ENCODE measurements at regions of chr1 and their contacts with region 1.

Region 1: GRCh38 chr1:34781071-34781843 is at the start of gene GJB3:
- DNase-seq: peak; percentile 70
- H3K4me3 ChIP-seq: peak within 1 kb of the TSS; percentile 98
- H3K27ac ChIP-seq: peak within 1 kb of the TSS; percentile 92
- H3K4me1 ChIP-seq: peaks cover 70% of the 10 kb centered on the region
- H3K27me3 ChIP-seq: no peaks in the 10 kb centered on the region
- CTCF ChIP-seq: no peak
- total RNA-seq, gene GJB3: 58.6 and 63.0 TPM in 2 replicates

Region 2: DNA sequence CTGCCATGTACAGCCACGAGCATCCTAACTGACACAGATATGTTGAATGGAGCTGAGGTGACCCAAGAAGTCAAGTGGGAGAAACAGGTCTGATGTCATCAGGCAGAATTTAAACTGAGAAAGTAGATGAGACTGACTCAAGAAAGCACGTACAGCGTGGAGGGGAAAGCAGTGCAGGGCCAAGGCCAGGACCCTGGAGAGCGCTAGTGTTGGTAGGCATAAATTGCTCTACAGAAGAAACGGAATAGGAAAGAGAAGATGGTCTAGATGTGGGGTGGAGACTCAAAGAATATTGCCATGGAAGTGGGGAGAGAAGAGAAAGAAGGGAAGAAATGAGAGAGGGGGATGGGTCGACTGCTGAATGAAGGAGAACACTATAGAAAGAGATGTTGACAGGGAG is 71.7 kb before region 1 on chr1:
- CTCF ChIA-PET with region 1: no interaction called
- POLR2A ChIA-PET with region 1: no interaction called
- intact Hi-C with region 1: no loop called
- DNase-seq: peak in 1 of 2 experiments; percentile 2
- H3K4me3 ChIP-seq: no peak overlapping the region
- H3K27ac ChIP-seq: no peak overlapping the region
- H3K4me1 ChIP-seq: no peaks in the 10 kb centered on the region
- H3K27me3 ChIP-seq: peaks cover 45% of the 10 kb centered on the region
- CTCF ChIP-seq: no peak

Region 3: DNA sequence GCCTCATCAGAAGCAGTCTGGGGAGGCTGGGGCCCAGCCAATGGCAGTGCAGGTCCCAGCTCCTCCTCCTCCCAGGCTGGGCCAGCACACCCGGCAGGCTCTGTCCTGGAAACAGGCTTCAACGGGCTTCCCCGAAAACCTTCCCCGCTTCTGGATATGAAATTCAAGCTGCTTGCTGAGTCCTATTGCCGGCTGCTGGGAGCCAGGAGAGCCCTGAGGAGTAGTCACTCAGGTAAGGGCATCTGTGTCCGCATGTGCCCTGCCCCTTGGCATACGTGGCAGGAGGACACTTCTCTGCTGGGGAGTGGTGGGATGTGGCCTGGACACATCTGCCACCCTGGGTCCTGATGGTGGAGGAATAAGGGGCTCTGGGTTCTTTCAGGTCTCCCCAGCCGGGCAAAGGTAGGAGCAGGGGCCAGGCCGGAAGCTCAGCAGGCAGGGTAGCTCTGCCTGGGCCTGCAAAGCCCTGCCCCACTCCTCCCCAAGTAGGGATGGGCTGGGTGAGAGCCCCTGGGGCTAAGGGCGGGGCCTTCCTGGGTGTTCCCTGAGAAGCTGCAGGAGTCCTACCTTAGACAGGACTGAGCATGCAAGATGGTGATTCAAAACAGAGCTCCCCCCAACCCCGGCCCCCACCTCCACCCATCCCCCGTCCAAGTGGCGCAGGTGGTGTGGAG is 26.2 kb before region 1 on chr1 and contains the start of gene GJB5:
- CTCF ChIA-PET with region 1: interaction called, 9 read pairs
- POLR2A ChIA-PET with region 1: interaction called, 27 read pairs
- intact Hi-C with region 1: loop called (anchors 1 kb)
- DNase-seq: peak; percentile 83 to 87
- H3K4me3 ChIP-seq: peak within 1 kb of the TSS; percentile 52
- H3K27ac ChIP-seq: peak within 1 kb of the TSS; percentile 81
- H3K4me1 ChIP-seq: peaks cover 47% of the 10 kb centered on the region
- H3K27me3 ChIP-seq: no peaks in the 10 kb centered on the region
- CTCF ChIP-seq: no peak
- total RNA-seq, gene GJB5: 18.1 and 20.0 TPM in 2 replicates

Region 4: DNA sequence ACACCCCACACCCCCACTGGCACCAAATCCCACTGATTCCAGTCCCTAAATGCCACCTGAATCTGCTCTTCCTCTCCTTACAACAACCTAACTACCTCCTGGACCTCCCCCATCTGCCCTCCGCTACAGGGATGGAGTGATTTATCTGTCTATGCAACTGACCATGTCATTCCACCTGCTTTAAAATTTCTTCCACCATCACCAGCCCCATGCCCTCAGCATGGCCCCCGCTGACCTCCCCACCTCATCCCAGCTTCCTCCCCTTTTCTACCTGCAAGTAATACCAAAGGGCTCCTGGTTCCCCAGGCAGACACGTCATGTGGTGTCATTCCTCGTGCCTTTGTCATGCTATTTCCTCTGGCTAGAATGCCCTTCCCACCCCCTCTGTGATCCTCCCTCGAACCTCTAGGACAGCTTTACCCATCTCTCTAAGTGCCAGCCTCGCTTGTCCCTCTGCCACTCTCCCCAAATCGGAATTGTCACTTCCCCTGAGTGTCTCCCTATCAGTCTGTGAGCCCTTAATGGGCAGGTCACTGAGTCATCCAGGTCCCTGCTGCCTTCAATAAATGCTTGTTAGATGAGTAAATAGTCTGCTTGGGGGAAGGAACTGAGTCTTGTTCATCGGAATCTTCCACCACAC is 18.0 kb before region 1 on chr1:
- CTCF ChIA-PET with region 1: interaction called, 11 read pairs
- POLR2A ChIA-PET with region 1: interaction called, 13 read pairs
- intact Hi-C with region 1: loop called (anchors 1 kb)
- DNase-seq: peak; percentile 71 to 99
- H3K4me3 ChIP-seq: peak overlapping the region; percentile 8; the same call in 1 of the 2 replicates
- H3K27ac ChIP-seq: peak overlapping the region; percentile 89
- H3K4me1 ChIP-seq: peaks cover 43% of the 10 kb centered on the region
- H3K27me3 ChIP-seq: no peaks in the 10 kb centered on the region
- CTCF ChIP-seq: no peak

Region 5: DNA sequence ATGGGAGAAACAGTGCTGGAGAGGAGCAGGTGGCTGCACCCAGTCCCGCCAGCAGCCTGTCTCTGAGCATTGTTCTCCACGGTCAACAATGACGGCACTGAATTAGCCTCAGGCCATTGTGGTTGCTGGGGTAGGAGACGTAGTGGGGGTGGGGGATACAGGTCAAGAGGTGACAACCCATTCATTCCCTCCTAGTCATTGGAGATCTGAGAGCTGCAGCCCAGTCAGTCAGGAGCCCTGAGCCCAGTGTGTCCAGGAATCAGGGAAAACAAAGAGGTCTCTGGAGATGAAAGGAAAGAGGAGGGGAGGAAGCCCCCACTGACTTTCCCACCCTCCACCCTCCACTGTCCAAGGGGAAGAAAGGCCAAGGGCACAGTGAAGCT is 63.0 kb after region 1 on chr1:
- CTCF ChIA-PET with region 1: no interaction called
- POLR2A ChIA-PET with region 1: interaction called, 10 read pairs
- intact Hi-C with region 1: no loop called
- DNase-seq: peak; percentile 69 to 73
- H3K4me3 ChIP-seq: no peak overlapping the region
- H3K27ac ChIP-seq: no peak overlapping the region
- H3K4me1 ChIP-seq: peaks cover 16% of the 10 kb centered on the region
- H3K27me3 ChIP-seq: no peaks in the 10 kb centered on the region
- CTCF ChIP-seq: no peak

Measured in PC-9 (cell line).